Activated CD4-positive, alpha-beta memory T cell treated with anti-CD3 and anti-CD28 coated beads for 36 hours (primary cell): ENCODE measurements at regions of chr12 and their contacts with region 1.

Region 1: GRCh38 chr12:120820885-120821510 is 83.2 kb downstream of the SPPL3 start:
- DNase-seq: peak; percentile 70
- H3K4me3 Mint-ChIP-seq: peak overlapping the region; percentile 34
- H3K27ac Mint-ChIP-seq: peak overlapping the region; percentile 66
- H3K4me1 Mint-ChIP-seq: peaks cover 44% of the 10 kb centered on the region
- H3K27me3 Mint-ChIP-seq: no peaks in the 10 kb centered on the region

Region 2: DNA sequence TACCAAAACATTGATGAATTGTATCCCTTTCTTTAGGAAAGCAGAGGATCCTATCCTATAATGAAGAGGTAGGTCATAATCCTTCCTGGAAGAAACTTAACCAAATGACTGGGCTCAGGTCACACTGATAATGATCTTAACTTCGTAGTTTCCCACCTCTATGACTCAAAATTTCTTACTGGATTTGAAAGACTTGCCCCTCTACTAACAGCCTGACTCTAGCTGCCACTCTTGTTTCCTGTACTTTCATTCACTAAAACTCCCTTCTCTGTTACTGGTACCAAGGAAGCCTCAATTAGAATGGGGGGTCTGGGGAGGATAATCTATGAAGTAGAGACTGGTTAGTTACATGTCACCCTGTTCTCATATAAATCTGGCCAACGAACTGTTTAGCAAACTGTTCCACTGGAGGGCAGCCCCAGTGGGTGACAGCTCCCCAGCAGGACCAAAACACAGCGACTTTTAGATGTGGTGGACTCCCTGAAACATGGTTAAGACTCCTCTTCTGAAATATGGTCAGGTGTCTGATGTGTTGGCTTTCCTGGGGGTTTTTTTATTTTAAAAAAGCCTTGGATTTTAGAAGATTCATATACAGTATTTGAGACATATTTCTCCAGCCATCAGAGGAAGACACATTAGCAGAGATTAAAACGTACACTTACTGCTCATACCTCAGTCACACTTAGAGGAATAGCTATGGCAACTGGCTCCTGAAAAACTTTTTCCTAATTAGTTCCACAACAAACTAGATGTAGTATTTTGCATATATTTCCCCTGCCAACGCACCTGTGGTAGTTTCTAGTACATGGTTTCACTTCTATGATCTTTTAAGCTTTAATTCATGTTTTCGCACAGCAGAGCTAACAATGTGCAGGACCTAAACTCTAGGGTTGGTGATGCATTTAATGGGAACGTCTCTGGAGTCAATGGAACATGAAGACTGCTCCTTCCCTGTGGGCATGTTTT is 23.0 kb before region 1 on chr12:
- CTCF ChIA-PET with region 1: interaction called, 5 read pairs
- POLR2A ChIA-PET with region 1: no interaction called
- intact Hi-C with region 1: loop called (anchors 1 kb)
- DNase-seq: peak; percentile 21
- H3K4me3 Mint-ChIP-seq: no peak overlapping the region
- H3K27ac Mint-ChIP-seq: peak overlapping the region; percentile 82
- H3K4me1 Mint-ChIP-seq: peaks cover 59% of the 10 kb centered on the region
- H3K27me3 Mint-ChIP-seq: no peaks in the 10 kb centered on the region

Region 3: GRCh38 chr12:120810021-120810420 is 11.0 kb before region 1 on chr12:
- CTCF ChIA-PET with region 1: no interaction called
- POLR2A ChIA-PET with region 1: no interaction called
- intact Hi-C with region 1: no loop called
- DNase-seq: no peak
- H3K4me3 Mint-ChIP-seq: no peak overlapping the region
- H3K27ac Mint-ChIP-seq: no peak overlapping the region
- H3K4me1 Mint-ChIP-seq: peaks cover 13% of the 10 kb centered on the region
- H3K27me3 Mint-ChIP-seq: no peaks in the 10 kb centered on the region

Region 4: DNA sequence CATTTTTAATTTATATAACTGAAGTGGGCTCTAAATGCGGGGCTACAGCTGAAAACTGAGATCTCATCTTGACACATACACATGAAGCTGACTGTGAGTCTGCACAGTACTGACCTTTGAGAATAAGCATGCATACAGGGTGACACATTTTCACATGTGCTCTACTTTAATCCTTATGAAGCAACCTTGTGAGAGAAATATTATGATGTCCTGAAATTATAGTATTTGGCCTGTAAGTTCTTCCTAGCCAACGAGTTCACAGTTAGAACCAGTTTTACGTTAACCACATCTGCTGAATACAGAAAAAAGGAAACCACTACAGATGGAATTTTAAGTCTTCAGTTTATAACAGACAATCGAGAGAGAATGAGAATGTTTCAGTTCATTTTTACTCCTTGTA is 12.9 kb after region 1 on chr12:
- CTCF ChIA-PET with region 1: no interaction called
- POLR2A ChIA-PET with region 1: no interaction called
- intact Hi-C with region 1: loop called (anchors 1 kb)
- DNase-seq: no peak
- H3K4me3 Mint-ChIP-seq: no peak overlapping the region
- H3K27ac Mint-ChIP-seq: no peak overlapping the region
- H3K4me1 Mint-ChIP-seq: peaks cover 67% of the 10 kb centered on the region
- H3K27me3 Mint-ChIP-seq: no peaks in the 10 kb centered on the region